ENCODE measurements at regions of chr19 and their contacts with region 1.

Region 1: DNA sequence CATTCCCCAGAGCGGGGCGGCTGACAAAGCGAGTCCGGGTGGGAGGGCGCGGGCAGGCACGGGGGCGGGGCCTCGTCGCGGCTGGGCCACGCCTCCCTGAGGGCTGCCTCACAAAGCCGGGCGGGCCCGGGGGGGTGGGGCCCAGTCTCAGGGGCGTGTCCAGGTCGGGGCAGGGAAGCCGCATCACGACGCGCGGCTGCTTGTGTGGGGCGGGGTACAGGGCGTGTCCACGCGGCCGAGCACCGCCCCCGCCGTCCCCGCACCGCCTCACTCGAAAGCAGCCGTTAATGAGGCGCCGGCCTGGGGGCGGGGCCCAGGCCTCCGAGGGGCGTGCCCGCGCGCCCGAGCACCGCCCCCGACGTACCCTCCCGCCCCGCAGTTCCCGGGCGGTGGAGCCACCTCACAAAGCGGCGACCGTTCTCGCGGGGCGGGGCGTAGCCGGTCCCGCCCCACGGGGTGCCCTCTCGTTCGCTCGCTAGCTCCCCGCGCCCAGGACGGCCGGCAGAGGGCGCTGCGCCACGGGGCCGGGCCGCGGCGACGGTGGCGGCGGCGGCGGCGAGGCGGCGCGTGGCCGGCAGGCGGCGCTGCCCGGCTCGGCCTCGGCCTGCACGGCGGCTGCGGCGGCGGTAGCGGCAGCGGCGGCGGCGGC is at the start of gene CARM1:
- DNase-seq: peak; percentile 97
- ATAC-seq: peak; percentile 93
- H3K4me3 ChIP-seq: peak within 1 kb of the TSS; percentile 97
- H3K27ac ChIP-seq: peak within 1 kb of the TSS; percentile 89
- H3K4me1 ChIP-seq: peaks cover 6% of the 10 kb centered on the region
- H3K27me3 ChIP-seq: no peaks in the 10 kb centered on the region
- CTCF ChIP-seq: peak; percentile 94
- POLR2A ChIP-seq: no peak
- RAD21 ChIP-seq: peak; percentile 59
- total RNA-seq, gene CARM1: 17.2 and 20.3 TPM in 2 replicates

Region 2: DNA sequence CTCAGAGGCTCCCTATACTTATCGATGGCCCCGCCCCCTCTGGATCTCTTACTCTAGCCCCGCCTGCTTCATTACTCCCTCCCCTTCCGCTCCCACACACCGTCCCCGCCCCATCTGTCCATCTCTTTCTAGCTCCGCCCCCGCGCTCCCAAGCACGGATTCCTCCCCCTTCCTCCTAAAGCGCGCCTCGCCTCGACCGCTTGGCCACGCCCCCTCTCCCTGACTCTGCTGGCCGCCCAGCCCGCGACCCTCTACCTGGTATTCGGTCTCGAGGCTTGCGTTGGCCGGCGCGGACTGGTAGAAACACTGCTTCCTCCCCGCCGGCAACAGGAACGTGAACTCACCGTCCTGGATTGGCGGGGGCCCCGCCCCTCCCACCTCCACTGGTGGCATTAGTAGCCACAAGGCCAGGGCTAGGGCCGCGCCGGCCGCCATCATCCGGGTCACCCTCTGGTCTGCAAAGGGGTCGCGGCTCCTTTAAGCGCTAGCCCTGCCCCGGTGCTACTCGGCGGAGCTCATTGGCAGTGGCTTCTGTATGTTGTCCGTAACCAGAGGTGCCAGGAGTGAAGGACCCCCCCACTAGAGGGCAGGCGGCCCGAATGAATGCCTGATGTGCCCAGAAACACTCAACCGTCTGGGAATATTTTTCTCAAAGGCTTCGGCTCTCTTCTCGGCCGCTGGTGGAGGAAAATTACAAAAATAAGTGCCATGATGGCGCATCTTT is 35.2 kb before region 1 on chr19 and contains the start of gene TMED1:
- CTCF ChIA-PET with region 1: no interaction called
- POLR2A ChIA-PET with region 1: interaction called, 14 read pairs
- dilution Hi-C with region 1: no loop called
- in situ Hi-C with region 1: no loop called
- intact Hi-C with region 1: no loop called
- DNase-seq: peak; percentile 98
- ATAC-seq: peak; percentile 93
- H3K4me3 ChIP-seq: peak within 1 kb of the TSS; percentile 64
- H3K27ac ChIP-seq: peak within 1 kb of the TSS; percentile 96
- H3K4me1 ChIP-seq: peaks cover 9% of the 10 kb centered on the region
- H3K27me3 ChIP-seq: no peaks in the 10 kb centered on the region
- CTCF ChIP-seq: peak; percentile 41
- POLR2A ChIP-seq: peak; percentile 74
- RAD21 ChIP-seq: peak; percentile 29; the same call in 1 of the 2 replicates
- total RNA-seq, gene TMED1: 32.8 and 37.6 TPM in 2 replicates

Region 3: GRCh38 chr19:10928525-10929401 is 57.7 kb after region 1 on chr19 and contains the starts of genes TIMM29 and YIPF2:
- CTCF ChIA-PET with region 1: interaction called, 7 read pairs
- POLR2A ChIA-PET with region 1: no interaction called
- dilution Hi-C with region 1: no loop called
- in situ Hi-C with region 1: no loop called
- intact Hi-C with region 1: loop called (anchors 5 kb)
- DNase-seq: peak; percentile 98
- ATAC-seq: peak; percentile 90
- H3K4me3 ChIP-seq: peak within 1 kb of the TSS; percentile 86
- H3K27ac ChIP-seq: peak within 1 kb of the TSS; percentile 68
- H3K4me1 ChIP-seq: peaks cover 12% of the 10 kb centered on the region
- H3K27me3 ChIP-seq: no peaks in the 10 kb centered on the region
- CTCF ChIP-seq: no peak
- POLR2A ChIP-seq: peak; percentile 72
- RAD21 ChIP-seq: no peak
- total RNA-seq, gene TIMM29: 13.4 and 13.9 TPM in 2 replicates
- total RNA-seq, gene YIPF2: 53.6 and 61.5 TPM in 2 replicates

Region 4: GRCh38 chr19:11339254-11340098 is 468.4 kb after region 1 on chr19 and contains the start of gene RAB3D:
- CTCF ChIA-PET with region 1: no interaction called
- POLR2A ChIA-PET with region 1: no interaction called
- dilution Hi-C with region 1: no loop called
- in situ Hi-C with region 1: no loop called
- intact Hi-C with region 1: no loop called
- DNase-seq: peak; percentile 77
- ATAC-seq: peak; percentile 99
- H3K4me3 ChIP-seq: peak within 1 kb of the TSS; percentile 85
- H3K27ac ChIP-seq: peak within 1 kb of the TSS; percentile 60
- H3K4me1 ChIP-seq: peaks cover 8% of the 10 kb centered on the region
- H3K27me3 ChIP-seq: no peaks in the 10 kb centered on the region
- CTCF ChIP-seq: no peak
- POLR2A ChIP-seq: no peak
- RAD21 ChIP-seq: 0 out of 2 replicates have a peak, but pooled peaks have one; percentile 6
- total RNA-seq, gene RAB3D: 4.8 and 5.0 TPM in 2 replicates

Region 5: DNA sequence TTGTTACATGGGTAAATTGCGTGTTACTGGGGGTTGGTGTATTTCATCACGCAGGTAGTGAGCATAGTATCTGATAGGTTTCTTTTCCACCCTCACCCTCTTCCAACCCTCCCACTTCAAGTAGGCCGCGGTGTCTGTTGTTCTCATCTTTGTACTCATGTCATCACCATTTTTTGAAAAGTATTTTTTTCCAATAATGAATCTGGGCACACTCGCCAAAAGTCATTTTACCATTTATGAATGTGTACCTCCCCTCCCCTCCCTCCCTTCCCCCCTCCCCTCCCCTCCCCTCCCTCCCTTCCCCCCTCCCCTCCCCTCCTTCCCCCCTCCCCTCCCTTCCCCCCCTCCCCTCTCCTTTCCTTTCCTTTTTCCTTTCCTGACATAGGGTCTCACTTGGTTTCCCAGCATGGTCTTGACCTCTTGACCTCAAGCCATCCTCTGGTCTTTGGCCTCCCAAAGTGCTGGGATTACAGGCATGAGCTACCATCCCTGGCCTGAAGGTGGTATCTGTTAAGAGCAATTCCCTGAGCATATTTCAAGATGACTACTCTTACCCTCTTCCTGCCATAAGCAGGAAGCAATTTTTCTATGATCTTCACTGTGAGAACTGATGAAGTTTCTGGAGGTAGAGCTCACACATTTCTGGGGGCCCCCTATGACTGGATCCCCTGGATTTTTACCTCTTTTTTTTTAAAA is 741.9 kb after region 1 on chr19:
- CTCF ChIA-PET with region 1: no interaction called
- POLR2A ChIA-PET with region 1: no interaction called
- dilution Hi-C with region 1: no loop called
- in situ Hi-C with region 1: no loop called
- intact Hi-C with region 1: no loop called
- DNase-seq: no peak
- ATAC-seq: no peak
- H3K4me3 ChIP-seq: no peak overlapping the region
- H3K27ac ChIP-seq: no peak overlapping the region
- H3K4me1 ChIP-seq: no peaks in the 10 kb centered on the region
- H3K27me3 ChIP-seq: no peaks in the 10 kb centered on the region
- CTCF ChIP-seq: no peak
- POLR2A ChIP-seq: no peak
- RAD21 ChIP-seq: no peak